Activated naive CD4-positive, alpha-beta T cell treated with anti-CD3 and anti-CD28 coated beads for 36 hours (primary cell): ENCODE measurements at regions of chr1 and their contacts with region 1.

Region 1: GRCh38 chr1:31394628-31395193 is 18.3 kb upstream of the SERINC2 start:
- DNase-seq: peak; percentile 90
- H3K4me3 Mint-ChIP-seq: peak overlapping the region; percentile 72
- H3K27ac Mint-ChIP-seq: no peak overlapping the region
- H3K4me1 Mint-ChIP-seq: peaks cover 6% of the 10 kb centered on the region
- H3K27me3 Mint-ChIP-seq: no peaks in the 10 kb centered on the region

Region 2: GRCh38 chr1:31073044-31073443 is 321.7 kb before region 1 on chr1:
- CTCF ChIA-PET with region 1: no interaction called
- intact Hi-C with region 1: no loop called
- DNase-seq: no peak
- H3K4me3 Mint-ChIP-seq: no peak overlapping the region
- H3K27ac Mint-ChIP-seq: no peak overlapping the region
- H3K4me1 Mint-ChIP-seq: peaks cover 2% of the 10 kb centered on the region
- H3K27me3 Mint-ChIP-seq: no peaks in the 10 kb centered on the region

Region 3: GRCh38 chr1:31372961-31373896 is 21.5 kb before region 1 on chr1 and contains the start of gene FABP3:
- CTCF ChIA-PET with region 1: interaction called, 16 read pairs
- intact Hi-C with region 1: no loop called
- DNase-seq: peak; percentile 27
- H3K4me3 Mint-ChIP-seq: peak within 1 kb of the TSS; percentile 56
- H3K27ac Mint-ChIP-seq: no peak within 1 kb of the TSS
- H3K4me1 Mint-ChIP-seq: peaks cover 7% of the 10 kb centered on the region
- H3K27me3 Mint-ChIP-seq: no peaks in the 10 kb centered on the region
- total RNA-seq, gene FABP3: not detected

Region 4: DNA sequence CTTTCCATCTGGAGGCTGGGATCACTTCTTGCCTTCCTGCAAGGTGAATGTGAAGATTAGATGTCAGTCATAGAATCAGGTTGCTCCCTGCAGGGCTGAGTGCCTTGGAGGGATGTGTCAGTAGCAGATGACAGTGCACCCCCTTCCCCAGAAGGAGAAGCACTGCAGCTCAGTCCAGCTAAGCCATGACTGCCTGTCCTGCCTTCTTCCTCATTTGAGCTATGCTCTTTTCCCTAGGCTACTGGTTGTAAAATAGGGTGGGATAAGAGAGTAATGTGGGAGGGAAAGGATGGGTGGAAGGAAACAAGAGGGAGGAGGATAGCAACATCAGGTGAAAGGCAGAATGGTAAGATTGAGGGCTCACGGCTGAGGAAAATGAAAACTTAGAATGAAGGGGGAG is 10.7 kb before region 1 on chr1:
- CTCF ChIA-PET with region 1: interaction called, 12 read pairs
- intact Hi-C with region 1: no loop called
- DNase-seq: no peak
- H3K4me3 Mint-ChIP-seq: no peak overlapping the region
- H3K27ac Mint-ChIP-seq: no peak overlapping the region
- H3K4me1 Mint-ChIP-seq: no peaks in the 10 kb centered on the region
- H3K27me3 Mint-ChIP-seq: peaks cover 15% of the 10 kb centered on the region

Region 5: DNA sequence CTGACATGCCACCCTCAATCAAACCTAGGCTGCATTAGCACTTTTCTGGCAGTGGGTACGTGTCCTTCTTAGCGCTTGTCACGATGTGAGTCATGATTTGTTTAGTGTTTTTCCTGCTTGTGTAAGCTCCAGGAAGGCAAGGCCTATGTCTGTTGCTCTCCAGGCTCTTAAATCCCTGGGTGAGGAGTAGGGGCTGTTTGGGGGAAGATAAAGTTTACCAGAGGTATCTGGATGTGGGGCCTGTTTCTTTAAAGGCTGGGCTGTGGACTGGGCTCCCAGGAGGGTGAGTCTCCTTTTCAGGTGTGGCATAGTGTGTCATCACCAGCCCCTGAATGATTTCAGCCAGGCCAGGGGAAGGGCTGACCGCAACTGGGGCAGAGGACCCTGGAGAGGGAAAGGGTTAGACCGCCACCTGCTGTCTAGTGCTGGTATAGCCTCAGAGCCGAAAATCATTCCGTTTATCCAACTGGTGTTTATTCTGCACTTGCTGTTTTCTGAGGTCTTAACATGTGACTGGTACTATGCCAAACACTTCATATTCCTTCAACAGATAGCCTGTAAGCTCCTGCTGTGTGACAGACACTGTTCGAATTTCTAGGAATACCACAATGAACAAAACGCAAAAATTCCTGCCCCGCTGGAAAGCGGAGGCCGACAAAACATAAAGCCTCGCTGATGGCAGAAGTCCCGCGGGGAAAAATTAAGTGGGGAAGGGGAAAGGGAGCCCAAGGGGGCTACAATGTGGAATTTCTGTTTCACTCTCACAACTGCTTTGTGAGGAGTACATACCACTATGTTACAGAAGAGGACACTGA is 28.0 kb after region 1 on chr1:
- CTCF ChIA-PET with region 1: interaction called, 80 read pairs
- intact Hi-C with region 1: loop called (anchors 1 kb)
- DNase-seq: peak; percentile 81
- H3K4me3 Mint-ChIP-seq: no peak overlapping the region
- H3K27ac Mint-ChIP-seq: no peak overlapping the region
- H3K4me1 Mint-ChIP-seq: peaks cover 2% of the 10 kb centered on the region
- H3K27me3 Mint-ChIP-seq: peaks cover 22% of the 10 kb centered on the region

Region 6: DNA sequence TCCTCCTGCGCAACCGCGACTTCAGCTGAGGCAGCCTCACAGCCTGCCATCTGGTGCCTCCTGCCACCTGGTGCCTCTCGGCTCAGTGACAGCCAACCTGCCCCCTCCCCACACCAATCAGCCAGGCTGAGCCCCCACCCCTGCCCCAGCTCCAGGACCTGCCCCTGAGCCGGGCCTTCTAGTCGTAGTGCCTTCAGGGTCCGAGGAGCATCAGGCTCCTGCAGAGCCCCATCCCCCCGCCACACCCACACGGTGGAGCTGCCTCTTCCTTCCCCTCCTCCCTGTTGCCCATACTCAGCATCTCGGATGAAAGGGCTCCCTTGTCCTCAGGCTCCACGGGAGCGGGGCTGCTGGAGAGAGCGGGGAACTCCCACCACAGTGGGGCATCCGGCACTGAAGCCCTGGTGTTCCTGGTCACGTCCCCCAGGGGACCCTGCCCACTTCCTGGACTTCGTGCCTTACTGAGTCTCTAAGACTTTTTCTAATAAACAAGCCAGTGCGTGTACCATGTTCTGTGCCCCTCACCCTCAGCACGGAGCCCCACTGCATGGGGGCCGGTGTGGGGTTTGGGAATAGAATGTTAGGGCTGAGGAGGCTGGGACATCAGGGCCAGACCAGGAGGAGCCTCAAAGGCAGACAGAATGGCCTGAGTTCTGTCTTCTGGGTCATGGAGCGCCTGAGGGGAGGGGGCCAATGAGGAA is 39.6 kb after region 1 on chr1:
- CTCF ChIA-PET with region 1: no interaction called
- intact Hi-C with region 1: no loop called
- DNase-seq: no peak
- H3K4me3 Mint-ChIP-seq: no peak overlapping the region
- H3K27ac Mint-ChIP-seq: no peak overlapping the region
- H3K4me1 Mint-ChIP-seq: no peaks in the 10 kb centered on the region
- H3K27me3 Mint-ChIP-seq: no peaks in the 10 kb centered on the region